ENCODE measurements at regions of chr6 and their contacts with region 1.

Region 1: DNA sequence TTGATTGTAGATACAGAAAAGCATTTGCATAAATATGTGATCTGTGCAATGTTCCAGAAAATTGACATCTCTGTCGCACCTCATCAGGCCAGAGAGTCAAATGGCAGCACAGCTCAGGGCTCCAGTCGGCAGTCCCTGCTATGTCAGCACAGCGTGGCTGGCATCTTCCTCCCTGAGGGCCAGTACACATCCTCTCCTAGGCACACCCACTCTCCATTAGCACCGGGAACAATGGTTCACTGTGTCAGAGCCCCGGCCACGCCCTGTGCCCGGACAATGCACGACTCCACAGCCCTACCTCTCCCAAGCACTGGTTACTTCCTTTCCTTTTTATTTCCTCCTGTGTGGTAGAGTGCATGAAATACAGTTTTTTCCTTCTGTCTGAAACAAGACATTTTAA is 114.9 kb downstream of the FOXC1 start:
- DNase-seq: peak; percentile 64
- H3K4me3 ChIP-seq: no peak overlapping the region
- H3K27ac ChIP-seq: no peak overlapping the region
- H3K4me1 ChIP-seq: peaks cover 19% of the 10 kb centered on the region
- H3K27me3 ChIP-seq: no peaks in the 10 kb centered on the region
- CTCF ChIP-seq: no peak
- POLR2A ChIP-seq: no peak

Region 2: GRCh38 chr6:1641323-1641885 is 83.2 kb before region 1 on chr6:
- CTCF ChIA-PET with region 1: no interaction called
- POLR2A ChIA-PET with region 1: no interaction called
- dilution Hi-C with region 1: no loop called
- intact Hi-C with region 1: no loop called
- DNase-seq: no peak
- H3K4me3 ChIP-seq: no peak overlapping the region
- H3K27ac ChIP-seq: no peak overlapping the region
- H3K4me1 ChIP-seq: peaks cover 13% of the 10 kb centered on the region
- H3K27me3 ChIP-seq: no peaks in the 10 kb centered on the region
- CTCF ChIP-seq: no peak
- POLR2A ChIP-seq: no peak

Region 3: GRCh38 chr6:2016040-2016439 is 291.4 kb after region 1 on chr6:
- CTCF ChIA-PET with region 1: no interaction called
- POLR2A ChIA-PET with region 1: no interaction called
- dilution Hi-C with region 1: no loop called
- intact Hi-C with region 1: loop called (anchors 10 kb)
- DNase-seq: no peak
- H3K4me3 ChIP-seq: no peak overlapping the region
- H3K27ac ChIP-seq: no peak overlapping the region
- H3K4me1 ChIP-seq: no peaks in the 10 kb centered on the region
- H3K27me3 ChIP-seq: no peaks in the 10 kb centered on the region
- CTCF ChIP-seq: no peak
- POLR2A ChIP-seq: no peak